ENCODE measurements at regions of chr21 and their contacts with region 1.

Region 1: DNA sequence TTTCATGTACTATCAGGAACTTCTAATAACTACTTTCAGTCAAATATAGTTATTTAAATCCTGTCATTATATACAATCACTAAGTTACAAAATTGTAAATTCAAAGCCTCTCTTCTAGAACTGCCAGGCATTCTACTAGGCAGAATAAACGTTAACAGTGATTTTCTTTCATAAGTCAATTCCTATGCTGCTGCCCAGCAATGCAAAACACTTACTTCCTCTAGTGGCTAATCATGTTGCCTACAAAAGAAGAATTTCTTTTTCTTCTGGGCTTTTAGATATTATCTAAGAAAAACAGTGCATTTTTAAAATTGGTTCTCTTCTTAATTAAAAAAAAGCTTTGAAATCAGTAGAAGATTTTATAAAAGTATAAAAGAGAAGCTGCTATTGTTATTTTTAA is 509.8 kb upstream of the ADAMTS5 start:
- DNase-seq: no peak
- H3K4me3 ChIP-seq: no peak overlapping the region
- H3K27ac ChIP-seq: no peak overlapping the region
- H3K4me1 ChIP-seq: no peaks in the 10 kb centered on the region
- H3K27me3 ChIP-seq: no peaks in the 10 kb centered on the region
- CTCF ChIP-seq: no peak
- POLR2A ChIP-seq: no peak

Region 2: GRCh38 chr21:25700741-25701140 is 1776.0 kb before region 1 on chr21:
- intact Hi-C with region 1: no loop called
- DNase-seq: no peak
- H3K4me3 ChIP-seq: no peak overlapping the region
- H3K27ac ChIP-seq: no peak overlapping the region
- H3K4me1 ChIP-seq: no peaks in the 10 kb centered on the region
- H3K27me3 ChIP-seq: no peaks in the 10 kb centered on the region
- CTCF ChIP-seq: no peak
- POLR2A ChIP-seq: no peak

Region 3: GRCh38 chr21:26850108-26850643 is 626.5 kb before region 1 on chr21:
- intact Hi-C with region 1: loop called (anchors 10 kb)
- DNase-seq: no peak
- H3K4me3 ChIP-seq: no peak overlapping the region
- H3K27ac ChIP-seq: no peak overlapping the region
- H3K4me1 ChIP-seq: no peaks in the 10 kb centered on the region
- H3K27me3 ChIP-seq: no peaks in the 10 kb centered on the region
- CTCF ChIP-seq: peak; percentile 65 to 87 (median 79)
- POLR2A ChIP-seq: no peak

Region 4: DNA sequence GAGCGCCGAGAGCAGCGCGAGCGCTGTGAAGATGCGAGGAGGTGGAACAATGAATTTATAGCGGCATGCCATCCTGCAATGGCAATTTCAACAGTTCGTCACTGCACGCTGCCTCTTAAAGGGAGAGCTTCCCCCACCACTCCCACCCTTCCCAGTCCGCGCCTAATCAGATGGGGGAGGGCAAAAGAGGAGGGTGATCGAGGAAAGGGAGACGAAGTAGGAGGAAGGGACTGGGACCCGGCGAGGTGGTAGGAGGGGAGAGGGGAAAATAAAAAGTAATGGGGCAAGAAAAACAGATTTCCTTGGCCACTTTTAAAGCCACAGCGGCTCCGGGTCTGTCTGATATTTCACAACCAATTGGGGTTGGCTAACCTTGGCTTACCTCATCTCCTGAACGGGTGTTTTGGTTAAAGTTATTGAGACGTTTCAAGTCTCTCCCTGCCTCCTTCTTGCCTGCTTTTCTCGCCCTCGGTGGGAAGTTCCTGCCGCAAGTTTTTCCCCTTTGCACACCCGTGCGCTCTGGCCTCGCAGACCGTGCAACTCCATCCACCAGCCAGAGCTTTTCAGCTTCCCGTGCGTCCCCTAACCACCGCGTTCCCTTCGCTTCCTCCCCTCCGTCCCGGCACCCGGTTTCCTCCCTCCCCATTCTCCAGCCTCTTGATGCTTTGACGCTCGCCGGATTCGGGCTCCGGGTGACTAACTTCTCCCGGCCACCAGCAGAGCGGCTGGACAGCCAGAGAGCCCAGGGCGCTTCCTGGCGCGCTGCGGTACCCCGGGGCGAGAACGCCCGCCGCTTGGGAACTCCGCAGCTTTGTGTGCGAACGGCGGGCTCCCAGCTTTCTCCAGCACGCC is 509.4 kb before region 1 on chr21 and contains the start of gene ADAMTS5:
- intact Hi-C with region 1: loop called (anchors 10 kb)
- DNase-seq: peak; percentile 5
- H3K4me3 ChIP-seq: peak within 1 kb of the TSS; percentile 33 to 40
- H3K27ac ChIP-seq: peak within 1 kb of the TSS; percentile 42 to 66
- H3K4me1 ChIP-seq: no peaks in the 10 kb centered on the region
- H3K27me3 ChIP-seq: peaks cover 6% of the 10 kb centered on the region
- CTCF ChIP-seq: no peak
- POLR2A ChIP-seq: no peak
- total RNA-seq, gene ADAMTS5: 3.0 TPM

Region 5: GRCh38 chr21:27380303-27380702 is 96.4 kb before region 1 on chr21:
- intact Hi-C with region 1: no loop called
- DNase-seq: no peak
- H3K4me3 ChIP-seq: no peak overlapping the region
- H3K27ac ChIP-seq: no peak overlapping the region
- H3K4me1 ChIP-seq: no peaks in the 10 kb centered on the region
- H3K27me3 ChIP-seq: no peaks in the 10 kb centered on the region
- CTCF ChIP-seq: no peak
- POLR2A ChIP-seq: no peak

Measured in prostate gland (tissue), 2 donors.